ENCODE measurements at regions of chr1 and their contacts with region 1.

Region 1: GRCh38 chr1:6199298-6200187 is at the start of gene RPL22:
- DNase-seq: peak; percentile 99
- H3K4me3 ChIP-seq: peak within 1 kb of the TSS; percentile 57 to 85 (median 76)
- H3K27ac ChIP-seq: peak within 1 kb of the TSS; percentile 79
- H3K4me1 ChIP-seq: peaks cover 11% of the 10 kb centered on the region
- H3K27me3 ChIP-seq: no peaks in the 10 kb centered on the region
- CTCF ChIP-seq: no peak
- total RNA-seq, gene RPL22: 69.7 to 303 TPM

Region 2: DNA sequence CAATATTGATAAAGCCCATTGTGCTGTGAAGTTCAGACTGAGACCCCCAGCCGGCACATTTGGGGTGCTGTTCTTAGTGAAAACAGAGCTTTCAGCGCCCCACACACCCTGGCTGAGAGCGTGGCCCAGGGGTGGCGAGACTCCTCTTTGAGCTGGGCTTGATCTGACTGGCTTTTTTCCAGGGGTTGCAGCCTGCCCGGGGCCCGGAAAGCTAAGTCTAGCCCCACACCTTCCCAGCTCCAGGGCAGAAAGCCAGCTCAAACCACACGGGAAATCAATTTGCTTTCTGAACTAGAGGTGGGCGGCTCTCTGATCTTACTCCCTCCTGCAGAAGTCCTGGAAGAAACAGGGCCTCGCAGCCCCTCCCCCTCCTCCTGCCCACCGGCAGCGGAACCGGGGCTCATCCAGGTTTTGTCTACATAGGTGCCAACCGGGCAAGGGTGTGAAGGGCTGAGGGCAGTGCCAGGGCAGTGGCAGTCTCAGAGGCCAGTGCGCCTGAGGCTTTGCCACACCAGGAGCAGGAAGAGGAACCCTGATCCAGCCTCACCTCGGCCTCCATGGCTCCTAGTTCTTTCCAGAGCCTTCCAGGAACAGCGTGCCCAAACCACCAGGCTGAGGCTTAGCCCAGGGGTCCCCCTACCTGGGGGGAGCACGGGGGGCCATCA is 362.6 kb before region 1 on chr1:
- CTCF ChIA-PET with region 1: no interaction called
- dilution Hi-C with region 1: no loop called
- in situ Hi-C with region 1: no loop called
- intact Hi-C with region 1: no loop called
- DNase-seq: no peak
- H3K4me3 ChIP-seq: no peak overlapping the region
- H3K27ac ChIP-seq: no peak overlapping the region
- H3K4me1 ChIP-seq: no peaks in the 10 kb centered on the region
- H3K27me3 ChIP-seq: no peaks in the 10 kb centered on the region
- CTCF ChIP-seq: no peak

Region 3: DNA sequence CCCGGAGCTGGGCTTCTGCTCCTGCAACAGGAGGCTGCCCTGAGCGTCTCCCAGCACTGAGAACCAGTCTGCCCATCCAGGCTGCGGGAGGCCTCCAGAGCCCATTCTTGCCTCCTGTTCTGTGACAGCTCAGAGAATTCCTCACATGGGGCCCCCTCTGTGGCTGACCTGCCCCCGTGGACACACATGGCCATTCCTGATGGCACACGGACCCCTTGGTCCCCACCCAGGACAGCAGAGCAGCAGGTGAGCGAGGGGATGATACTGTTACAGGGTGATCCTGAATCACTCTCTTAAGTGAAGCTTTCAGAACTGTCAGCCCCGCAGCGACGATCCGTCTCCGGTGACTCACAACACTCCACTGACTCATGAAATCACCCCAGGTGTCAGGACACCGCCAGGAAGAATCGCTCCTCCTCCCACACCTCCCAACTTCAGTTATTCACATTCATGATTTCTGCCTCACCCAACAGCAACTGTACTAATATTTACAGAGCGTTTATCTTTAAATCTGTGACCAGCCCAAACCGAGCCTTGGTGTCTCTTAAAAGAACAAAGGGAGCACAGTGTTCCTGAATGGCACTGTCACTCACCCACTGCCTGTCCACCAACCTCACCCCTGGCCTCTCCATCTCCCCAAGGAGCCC is 41.9 kb before region 1 on chr1:
- CTCF ChIA-PET with region 1: no interaction called
- dilution Hi-C with region 1: no loop called
- in situ Hi-C with region 1: no loop called
- intact Hi-C with region 1: loop called (anchors 2 kb)
- DNase-seq: peak; percentile 96
- H3K4me3 ChIP-seq: no peak overlapping the region
- H3K27ac ChIP-seq: peak overlapping the region; percentile 78
- H3K4me1 ChIP-seq: peaks cover 22% of the 10 kb centered on the region
- H3K27me3 ChIP-seq: no peaks in the 10 kb centered on the region
- CTCF ChIP-seq: no peak

Region 4: GRCh38 chr1:6235296-6235677 is 35.7 kb after region 1 on chr1:
- CTCF ChIA-PET with region 1: interaction called, 3 read pairs
- dilution Hi-C with region 1: loop called (anchors 5 kb)
- in situ Hi-C with region 1: no loop called
- intact Hi-C with region 1: loop called (anchors 2 kb)
- DNase-seq: no peak
- H3K4me3 ChIP-seq: peak overlapping the region; percentile 68 to 83 (median 70)
- H3K27ac ChIP-seq: peak overlapping the region; percentile 30
- H3K4me1 ChIP-seq: peaks cover 7% of the 10 kb centered on the region
- H3K27me3 ChIP-seq: no peaks in the 10 kb centered on the region
- CTCF ChIP-seq: no peak

Region 5: DNA sequence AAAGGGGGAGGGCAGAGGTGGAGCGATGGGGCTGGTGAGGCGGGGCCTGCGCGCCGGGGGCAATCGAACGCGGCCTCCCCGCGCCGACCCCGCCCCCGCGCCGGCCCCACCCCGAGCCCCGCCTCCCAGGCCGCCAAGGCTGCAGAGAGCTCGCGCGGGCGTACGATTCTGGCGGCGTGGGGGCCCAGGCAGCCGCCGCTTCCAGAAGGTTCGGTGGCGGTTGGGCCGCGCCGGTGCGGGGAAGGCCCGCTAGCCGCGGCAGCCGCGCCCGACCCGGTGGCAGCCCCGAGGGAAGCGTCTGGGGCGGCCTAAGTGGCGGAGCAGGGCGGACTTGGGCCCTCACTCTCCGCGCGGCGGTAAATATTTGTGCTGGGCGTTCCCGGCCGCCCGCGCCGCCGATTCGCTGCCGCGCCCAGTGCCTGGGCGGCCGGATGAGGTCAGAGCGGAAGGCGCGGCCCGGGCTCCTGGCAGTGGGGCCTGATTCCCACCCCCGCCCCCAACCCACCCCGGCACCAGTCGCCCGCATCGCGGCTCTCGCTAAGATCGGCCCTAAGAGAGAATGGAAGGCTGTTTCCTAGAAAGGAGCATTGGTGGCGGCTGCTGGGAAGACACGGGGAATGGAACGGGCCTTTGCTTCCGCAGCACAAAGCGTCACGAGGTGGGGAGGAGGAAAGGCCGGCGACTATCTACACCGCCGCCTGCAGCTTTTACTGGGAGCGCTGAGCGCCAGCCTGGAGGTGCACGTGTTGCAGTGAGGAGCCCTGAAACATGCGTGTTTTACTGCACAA is 194.1 kb after region 1 on chr1 and contains the start of gene ACOT7:
- CTCF ChIA-PET with region 1: no interaction called
- dilution Hi-C with region 1: no loop called
- in situ Hi-C with region 1: no loop called
- intact Hi-C with region 1: loop called (anchors 5 kb)
- DNase-seq: peak; percentile 92
- H3K4me3 ChIP-seq: peak within 1 kb of the TSS; percentile 67 to 73 (median 73)
- H3K27ac ChIP-seq: peak within 1 kb of the TSS; percentile 64
- H3K4me1 ChIP-seq: peaks cover 27% of the 10 kb centered on the region
- H3K27me3 ChIP-seq: no peaks in the 10 kb centered on the region
- CTCF ChIP-seq: peak in 1 of 2 donors; percentile 49
- total RNA-seq, gene ACOT7: 67.2 to 193 TPM

Measured in mammary epithelial cell (primary cell).